ENCODE measurements at regions of chr7 and their contacts with region 1.

Region 1: DNA sequence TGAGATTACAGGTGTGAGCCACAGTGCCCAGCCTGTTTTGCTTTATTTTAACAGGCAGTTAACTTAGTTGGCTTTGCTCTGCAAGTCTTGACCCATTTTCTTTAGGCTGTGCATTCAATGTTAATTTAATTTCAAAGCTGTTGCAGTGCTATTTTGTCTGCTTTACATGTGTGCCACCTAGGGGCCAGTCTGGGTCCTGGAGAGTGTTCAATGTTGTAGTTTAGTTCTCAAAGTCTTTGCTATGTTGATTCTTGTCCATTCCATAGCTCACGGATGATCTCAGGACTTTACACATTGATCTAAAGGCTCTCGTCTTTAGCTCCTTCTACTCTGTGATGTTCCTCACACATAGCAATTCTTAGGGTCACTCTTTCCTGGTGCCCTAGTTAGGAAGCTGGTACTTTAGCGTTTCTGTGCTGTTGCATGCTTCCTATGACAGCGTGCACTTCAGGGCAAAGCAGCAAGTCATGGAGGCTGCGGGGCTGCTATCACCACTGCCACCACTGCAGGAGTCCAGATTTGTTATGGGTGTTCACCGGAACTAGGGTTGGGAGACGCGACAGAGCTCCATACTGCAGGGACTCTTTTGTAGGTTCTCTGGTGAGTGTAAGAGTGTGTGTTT is 16.4 kb upstream of the ABCA13 start:
- DNase-seq: peak; percentile 38
- H3K4me3 ChIP-seq: no peak overlapping the region
- H3K27ac ChIP-seq: no peak overlapping the region
- H3K4me1 ChIP-seq: no peaks in the 10 kb centered on the region
- H3K27me3 ChIP-seq: no peaks in the 10 kb centered on the region
- CTCF ChIP-seq: peak; percentile 87 to 89

Region 2: DNA sequence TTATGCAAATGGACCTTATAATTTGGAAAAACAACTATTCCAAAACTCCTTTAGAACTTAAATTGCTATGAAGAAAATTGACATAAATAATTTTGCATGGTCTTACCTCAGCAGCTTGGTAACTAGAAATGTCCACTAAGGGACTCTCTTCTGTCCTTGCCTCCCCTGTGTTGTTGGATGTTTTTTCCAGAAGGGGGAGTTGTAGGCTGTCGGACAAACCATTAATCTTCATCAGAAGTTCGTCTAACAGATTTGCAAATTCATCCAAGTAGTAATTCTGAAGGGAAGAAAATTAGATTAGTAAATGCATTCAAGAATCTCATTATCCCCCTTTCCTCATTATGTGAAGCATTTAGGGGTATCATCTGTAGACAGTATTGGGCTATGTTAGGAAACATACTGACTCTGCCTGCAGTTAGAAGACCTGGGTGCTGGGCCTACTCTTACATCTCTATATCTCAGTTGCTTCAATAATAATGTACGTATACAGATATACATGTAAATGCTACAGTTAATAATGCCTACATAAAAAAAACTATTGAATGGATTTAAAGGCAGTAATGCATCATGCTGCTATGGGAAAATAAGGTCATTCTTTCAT is 362.3 kb before region 1 on chr7:
- CTCF ChIA-PET with region 1: no interaction called
- dilution Hi-C with region 1: no loop called
- in situ Hi-C with region 1: no loop called
- intact Hi-C with region 1: no loop called
- DNase-seq: no peak
- H3K4me3 ChIP-seq: no peak overlapping the region
- H3K27ac ChIP-seq: no peak overlapping the region
- H3K4me1 ChIP-seq: peaks cover 4% of the 10 kb centered on the region
- H3K27me3 ChIP-seq: no peaks in the 10 kb centered on the region
- CTCF ChIP-seq: peak; percentile 41 to 55

Region 3: GRCh38 chr7:47852330-47853245 is 302.3 kb before region 1 on chr7:
- CTCF ChIA-PET with region 1: no interaction called
- dilution Hi-C with region 1: no loop called
- in situ Hi-C with region 1: no loop called
- intact Hi-C with region 1: loop called (anchors 1 kb)
- DNase-seq: no peak
- H3K4me3 ChIP-seq: no peak overlapping the region
- H3K27ac ChIP-seq: no peak overlapping the region
- H3K4me1 ChIP-seq: no peaks in the 10 kb centered on the region
- H3K27me3 ChIP-seq: no peaks in the 10 kb centered on the region
- CTCF ChIP-seq: peak; percentile 20 to 33

Region 4: GRCh38 chr7:47945261-47946001 is 209.5 kb before region 1 on chr7:
- CTCF ChIA-PET with region 1: interaction called, 7 read pairs
- dilution Hi-C with region 1: no loop called
- in situ Hi-C with region 1: loop called in 1 of 2 experiments (anchors 5 kb)
- intact Hi-C with region 1: loop called (anchors 1 kb)
- DNase-seq: peak; percentile 30
- H3K4me3 ChIP-seq: no peak overlapping the region
- H3K27ac ChIP-seq: no peak overlapping the region
- H3K4me1 ChIP-seq: peaks cover 16% of the 10 kb centered on the region
- H3K27me3 ChIP-seq: no peaks in the 10 kb centered on the region
- CTCF ChIP-seq: peak; percentile 66 to 74

Region 5: DNA sequence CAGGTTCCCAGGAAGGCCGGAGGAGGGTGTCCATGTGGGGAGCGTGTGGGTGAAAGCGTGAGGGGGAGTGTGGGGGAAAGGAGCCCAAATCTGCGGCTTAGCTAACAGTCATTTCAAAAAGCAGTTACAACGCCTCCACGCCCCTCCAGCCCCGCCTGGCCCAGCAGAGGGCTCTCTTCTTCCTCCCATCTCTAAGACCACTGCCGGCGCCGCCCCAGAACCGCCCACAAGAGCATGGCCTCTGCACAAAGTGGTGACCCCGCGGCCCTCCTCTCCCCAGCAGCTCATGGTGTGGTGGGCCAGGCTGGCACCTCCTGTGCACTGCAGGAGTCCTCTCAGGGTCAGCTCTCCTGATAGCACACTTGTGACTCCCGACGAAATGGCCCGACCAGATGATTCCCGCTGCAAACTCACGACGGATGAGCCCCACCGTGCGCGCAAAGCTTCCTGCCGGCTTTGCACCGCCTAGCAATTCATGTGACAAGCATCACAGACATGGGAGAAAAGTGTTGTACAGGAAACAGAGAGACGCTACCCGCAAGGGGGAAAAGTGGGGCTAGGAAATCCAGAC is 163.1 kb before region 1 on chr7:
- CTCF ChIA-PET with region 1: no interaction called
- dilution Hi-C with region 1: no loop called
- in situ Hi-C with region 1: no loop called
- intact Hi-C with region 1: loop called (anchors 1 kb)
- DNase-seq: peak; percentile 52
- H3K4me3 ChIP-seq: peak overlapping the region; percentile 34 to 52 (median 35)
- H3K27ac ChIP-seq: no peak overlapping the region
- H3K4me1 ChIP-seq: peaks cover 7% of the 10 kb centered on the region
- H3K27me3 ChIP-seq: no peaks in the 10 kb centered on the region
- CTCF ChIP-seq: peak; percentile 32 to 62

Region 6: DNA sequence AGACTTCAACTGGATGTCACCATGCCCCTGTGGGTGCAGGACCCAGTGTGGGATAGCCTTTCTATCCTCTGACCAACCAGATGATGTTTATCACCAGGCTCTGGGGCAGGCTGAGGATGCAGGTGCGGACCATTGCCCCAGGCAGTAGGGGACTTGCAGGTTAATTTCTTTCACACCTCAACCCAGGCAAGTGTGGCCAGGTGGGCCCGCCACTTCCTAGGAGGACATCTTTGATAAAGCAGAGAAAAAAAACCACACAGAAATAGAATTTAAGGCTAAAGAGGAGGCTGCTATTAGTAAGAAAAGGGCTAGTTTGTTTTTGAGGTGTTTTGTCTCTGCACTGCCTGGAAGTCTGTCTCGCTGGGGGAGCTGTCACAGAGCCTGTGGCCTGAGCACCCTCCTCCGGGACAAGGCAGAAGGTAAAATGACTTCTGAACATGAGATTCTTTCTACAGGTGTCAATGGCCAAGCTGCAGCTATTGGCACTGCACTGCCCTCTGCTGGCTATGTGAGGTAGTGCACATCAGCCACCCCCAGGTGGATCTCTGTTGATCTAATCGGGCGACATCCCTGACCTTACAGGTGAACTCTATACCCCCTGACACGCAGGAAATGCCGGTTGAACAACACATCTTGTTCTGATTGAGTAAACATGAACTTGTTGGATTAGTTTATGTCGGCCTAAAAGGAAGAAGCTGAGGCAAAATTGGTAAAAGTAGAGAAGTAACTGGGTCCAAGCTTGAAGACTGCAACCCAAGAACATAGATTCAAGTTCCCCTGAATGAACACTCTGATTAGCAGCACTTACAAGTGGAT is 44.8 kb before region 1 on chr7:
- CTCF ChIA-PET with region 1: no interaction called
- dilution Hi-C with region 1: no loop called
- in situ Hi-C with region 1: no loop called
- intact Hi-C with region 1: loop called (anchors 2 kb)
- DNase-seq: peak; percentile 71
- H3K4me3 ChIP-seq: no peak overlapping the region
- H3K27ac ChIP-seq: no peak overlapping the region
- H3K4me1 ChIP-seq: peaks cover 12% of the 10 kb centered on the region
- H3K27me3 ChIP-seq: no peaks in the 10 kb centered on the region
- CTCF ChIP-seq: peak; percentile 98 to 99

Region 7: DNA sequence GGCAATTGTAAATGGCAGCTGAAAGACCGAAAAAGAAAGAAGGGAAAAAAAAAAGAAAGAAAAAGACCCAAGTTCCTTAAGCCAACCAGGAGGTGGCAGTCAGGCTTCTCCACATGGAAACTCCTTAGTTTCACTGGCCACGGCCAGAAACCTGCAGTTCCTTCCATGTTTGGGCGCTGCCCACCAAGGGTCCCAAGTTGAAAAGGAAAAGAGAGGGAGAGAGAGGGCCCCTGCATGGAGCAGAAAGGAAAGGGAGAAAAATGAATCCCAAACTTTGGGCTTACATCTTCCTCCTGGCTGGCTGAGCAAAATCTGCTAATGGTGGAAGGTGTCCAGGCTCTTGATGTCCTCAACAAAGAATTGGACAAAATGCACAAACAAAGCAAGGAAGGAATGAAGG is 15.4 kb before region 1 on chr7:
- CTCF ChIA-PET with region 1: interaction called, 4 read pairs
- dilution Hi-C with region 1: no loop called
- in situ Hi-C with region 1: no loop called
- intact Hi-C with region 1: loop called (anchors 2 kb)
- DNase-seq: no peak
- H3K4me3 ChIP-seq: no peak overlapping the region
- H3K27ac ChIP-seq: no peak overlapping the region
- H3K4me1 ChIP-seq: no peaks in the 10 kb centered on the region
- H3K27me3 ChIP-seq: no peaks in the 10 kb centered on the region
- CTCF ChIP-seq: peak; percentile 2 to 37

Region 8: GRCh38 chr7:48188776-48189520 is 34.0 kb after region 1 on chr7:
- CTCF ChIA-PET with region 1: no interaction called
- dilution Hi-C with region 1: no loop called
- in situ Hi-C with region 1: no loop called
- intact Hi-C with region 1: no loop called
- DNase-seq: peak; percentile 36
- H3K4me3 ChIP-seq: no peak overlapping the region
- H3K27ac ChIP-seq: no peak overlapping the region
- H3K4me1 ChIP-seq: no peaks in the 10 kb centered on the region
- H3K27me3 ChIP-seq: no peaks in the 10 kb centered on the region
- CTCF ChIP-seq: no peak

Region 9: GRCh38 chr7:48295296-48295971 is 140.5 kb after region 1 on chr7:
- CTCF ChIA-PET with region 1: no interaction called
- dilution Hi-C with region 1: no loop called
- in situ Hi-C with region 1: no loop called
- intact Hi-C with region 1: no loop called
- DNase-seq: no peak
- H3K4me3 ChIP-seq: no peak overlapping the region
- H3K27ac ChIP-seq: no peak overlapping the region
- H3K4me1 ChIP-seq: peaks cover 14% of the 10 kb centered on the region
- H3K27me3 ChIP-seq: no peaks in the 10 kb centered on the region
- CTCF ChIP-seq: no peak